PC-3 (cell line): ENCODE measurements at regions of chr9 and their contacts with region 1.

Region 1: GRCh38 chr9:127450830-127451724 is at the starts of genes LRSAM1 and RPL12:
- DNase-seq: peak; percentile 91
- ATAC-seq: peak; percentile 58
- H3K4me3 ChIP-seq: peak within 1 kb of the TSS; percentile 84
- H3K27ac ChIP-seq: peak within 1 kb of the TSS; percentile 78
- H3K4me1 ChIP-seq: peaks cover 13% of the 10 kb centered on the region
- H3K27me3 ChIP-seq: no peaks in the 10 kb centered on the region
- CTCF ChIP-seq: no peak
- total RNA-seq, gene LRSAM1: 9.6 and 11.1 TPM in 2 replicates
- total RNA-seq, gene RPL12: 1,109 and 1,417 TPM in 2 replicates

Region 2: DNA sequence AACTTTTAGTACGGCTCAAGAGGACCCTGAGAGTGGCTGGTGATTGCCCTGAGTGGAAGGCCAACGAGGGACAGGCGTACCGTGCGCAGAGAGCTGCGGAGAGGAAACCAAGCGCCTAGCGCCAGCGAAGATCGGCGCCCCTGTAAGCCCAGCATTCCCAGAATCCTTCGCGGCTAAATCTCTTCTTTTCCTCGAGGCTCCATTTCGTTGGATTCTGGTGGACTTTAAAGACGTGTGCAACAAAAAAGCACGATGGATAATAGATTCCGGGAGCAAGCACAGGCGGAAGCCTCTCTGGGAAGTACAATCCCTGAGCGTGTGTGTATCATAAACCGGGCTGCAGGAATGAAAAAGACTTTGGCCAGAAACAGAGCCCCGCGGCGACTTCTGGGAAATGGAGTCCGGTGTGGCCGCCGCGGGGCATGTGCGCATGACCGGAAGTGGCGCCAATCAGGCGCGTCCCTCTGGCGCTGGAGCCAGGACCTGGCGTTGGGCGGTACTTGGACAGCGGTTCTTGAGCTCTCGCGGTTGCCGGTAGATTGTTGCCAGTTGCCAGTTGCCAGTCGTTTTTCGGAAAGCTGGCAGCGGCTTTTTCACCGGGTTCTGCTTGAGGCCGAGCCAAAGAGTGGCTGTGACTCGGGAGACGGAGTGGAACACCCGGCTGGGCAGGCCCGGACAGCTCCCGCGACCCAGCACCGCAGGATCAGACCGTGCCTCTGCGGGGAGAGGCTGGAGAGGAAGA is 27.0 kb before region 1 on chr9 and contains the start of gene ZNF79:
- CTCF ChIA-PET with region 1: no interaction called
- POLR2A ChIA-PET with region 1: interaction called, 3 read pairs
- intact Hi-C with region 1: loop called (anchors 1 kb)
- DNase-seq: peak; percentile 86
- ATAC-seq: peak; percentile 84
- H3K4me3 ChIP-seq: peak within 1 kb of the TSS; percentile 97
- H3K27ac ChIP-seq: peak within 1 kb of the TSS; percentile 80
- H3K4me1 ChIP-seq: peaks cover 38% of the 10 kb centered on the region
- H3K27me3 ChIP-seq: no peaks in the 10 kb centered on the region
- CTCF ChIP-seq: no peak
- total RNA-seq, gene ZNF79: 4.9 and 5.8 TPM in 2 replicates

Region 3: GRCh38 chr9:127489471-127490115 is 38.5 kb after region 1 on chr9:
- CTCF ChIA-PET with region 1: no interaction called
- POLR2A ChIA-PET with region 1: no interaction called
- intact Hi-C with region 1: no loop called
- DNase-seq: no peak
- ATAC-seq: no peak
- H3K4me3 ChIP-seq: no peak overlapping the region
- H3K27ac ChIP-seq: no peak overlapping the region
- H3K4me1 ChIP-seq: no peaks in the 10 kb centered on the region
- H3K27me3 ChIP-seq: no peaks in the 10 kb centered on the region
- CTCF ChIP-seq: no peak